HepG2 (cell line): ENCODE measurements at regions of chr17 and their contacts with region 1.

Region 1: DNA sequence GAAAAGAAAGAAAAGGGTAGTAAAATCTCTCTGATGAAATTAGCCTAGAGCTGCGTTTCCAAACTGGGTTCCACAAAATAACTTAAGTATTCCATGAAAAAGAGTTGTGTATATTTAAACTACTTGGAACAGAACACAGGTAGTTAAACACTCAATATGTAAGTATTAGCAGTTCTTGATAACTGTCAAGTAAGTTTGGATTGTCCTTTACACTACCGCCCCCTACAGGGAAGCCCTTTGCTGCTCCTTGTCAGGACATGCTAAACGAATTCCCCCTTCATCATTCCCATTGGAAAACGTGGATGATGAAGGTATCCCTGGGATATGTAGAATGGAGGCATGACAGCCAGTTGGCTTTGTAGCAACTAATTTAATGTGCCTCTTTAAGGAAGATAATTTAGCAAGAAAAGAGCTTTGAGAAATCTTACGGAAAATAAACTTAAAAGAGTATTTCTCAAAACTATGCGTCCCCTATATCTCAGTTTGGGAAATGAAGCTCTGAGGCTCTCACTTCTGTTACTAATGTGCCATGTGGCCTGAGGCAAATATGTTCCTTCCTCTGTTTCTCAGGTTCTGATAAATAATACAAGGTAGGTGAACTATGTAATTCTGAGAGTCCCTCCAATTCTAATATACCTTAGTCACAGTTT is 18.8 kb downstream of the NCBP3 start:
- DNase-seq: peak; percentile 79
- ATAC-seq: peak; percentile 61
- H3K4me3 ChIP-seq: no peak overlapping the region
- H3K27ac ChIP-seq: no peak overlapping the region
- H3K4me1 ChIP-seq: no peaks in the 10 kb centered on the region; the same call in 1 of the 2 replicates
- H3K27me3 ChIP-seq: no peaks in the 10 kb centered on the region; a peak in 1 of 5 replicates
- CTCF ChIP-seq: peak; percentile 87
- EP300 ChIP-seq: no peak
- POLR2A ChIP-seq: no peak
- RAD21 ChIP-seq: peak; percentile 84

Region 2: DNA sequence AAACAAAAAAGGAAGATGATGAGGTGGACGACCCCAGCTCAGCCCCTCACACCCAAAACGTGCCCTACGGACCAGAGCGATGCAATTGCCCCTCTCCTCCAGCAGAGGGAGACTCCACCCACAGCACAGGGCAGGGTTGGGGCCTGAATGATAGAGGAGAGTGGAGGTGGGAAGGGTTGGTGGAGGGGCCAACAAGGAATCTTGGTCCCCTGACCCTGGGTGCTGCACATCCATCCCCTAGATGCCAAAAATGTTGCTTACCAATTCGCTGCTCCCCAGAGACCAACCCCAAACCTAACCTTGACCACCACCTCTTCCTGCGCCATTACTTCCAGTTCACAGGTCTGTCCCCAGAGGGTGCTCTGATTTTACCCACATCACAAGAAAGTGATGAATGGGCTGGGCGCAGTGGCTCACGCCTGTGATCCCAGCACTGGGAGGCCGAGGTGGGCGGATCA is 144.2 kb before region 1 on chr17:
- CTCF ChIA-PET with region 1: interaction called, 7 read pairs
- POLR2A ChIA-PET with region 1: no interaction called
- in situ Hi-C with region 1: no loop called
- intact Hi-C with region 1: loop called (anchors 5 kb)
- DNase-seq: peak; percentile 27
- ATAC-seq: peak; percentile 65
- H3K4me3 ChIP-seq: no peak overlapping the region
- H3K27ac ChIP-seq: no peak overlapping the region
- H3K4me1 ChIP-seq: peaks cover 10% of the 10 kb centered on the region
- H3K27me3 ChIP-seq: peaks cover 2 to 7% of the 10 kb centered on the region in 2 experiments; a peak in 4 of 5 replicates
- CTCF ChIP-seq: peak; percentile 91
- EP300 ChIP-seq: no peak
- POLR2A ChIP-seq: no peak
- RAD21 ChIP-seq: peak; percentile 44

Region 3: DNA sequence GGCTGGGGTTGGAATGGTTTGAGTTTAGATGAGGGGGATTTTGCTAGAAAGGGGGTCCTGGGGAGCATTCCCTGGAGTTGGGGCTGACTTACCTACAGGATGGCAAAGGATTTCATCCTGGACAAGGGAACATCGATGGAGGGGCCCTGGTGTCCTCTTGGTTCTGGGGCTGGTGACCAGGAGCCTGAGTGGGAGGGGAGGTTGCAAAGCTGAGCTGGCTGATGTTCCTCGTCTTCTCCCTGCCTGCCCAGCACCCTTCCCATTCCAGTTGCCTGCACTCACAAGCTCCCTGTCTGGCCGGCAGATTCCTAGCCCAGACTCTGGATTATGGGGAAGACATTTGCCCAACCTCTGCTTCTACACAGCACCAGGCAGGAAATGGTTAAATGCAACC is 63.5 kb before region 1 on chr17:
- CTCF ChIA-PET with region 1: interaction called, 9 read pairs
- POLR2A ChIA-PET with region 1: no interaction called
- in situ Hi-C with region 1: no loop called
- intact Hi-C with region 1: loop called (anchors 2 kb)
- DNase-seq: no peak
- ATAC-seq: no peak; the same call in 2 of the 3 replicates
- H3K4me3 ChIP-seq: no peak overlapping the region
- H3K27ac ChIP-seq: no peak overlapping the region
- H3K4me1 ChIP-seq: peaks cover 49% of the 10 kb centered on the region
- H3K27me3 ChIP-seq: no peaks in the 10 kb centered on the region
- CTCF ChIP-seq: no peak
- EP300 ChIP-seq: no peak
- POLR2A ChIP-seq: no peak
- RAD21 ChIP-seq: no peak